ENCODE measurements at regions of chr11 and their contacts with region 1.

Region 1: GRCh38 chr11:13462901-13463778 is at the start of gene BTBD10:
- DNase-seq: peak; percentile 94
- H3K4me3 Mint-ChIP-seq: peak within 1 kb of the TSS; percentile 99
- H3K27ac Mint-ChIP-seq: peak within 1 kb of the TSS; percentile 96
- H3K4me1 Mint-ChIP-seq: peaks cover 33% of the 10 kb centered on the region
- H3K27me3 Mint-ChIP-seq: no peaks in the 10 kb centered on the region
- total RNA-seq, gene BTBD10: 20.9 to 21.0 TPM

Region 2: GRCh38 chr11:12963792-12964536 is 499.2 kb before region 1 on chr11:
- CTCF ChIA-PET with region 1: no interaction called
- intact Hi-C with region 1: loop called (anchors 2 kb)
- DNase-seq: peak; percentile 75
- H3K4me3 Mint-ChIP-seq: no peak overlapping the region
- H3K27ac Mint-ChIP-seq: no peak overlapping the region
- H3K4me1 Mint-ChIP-seq: no peaks in the 10 kb centered on the region
- H3K27me3 Mint-ChIP-seq: peaks cover 13% of the 10 kb centered on the region

Region 3: GRCh38 chr11:13335319-13335718 is 127.8 kb before region 1 on chr11:
- CTCF ChIA-PET with region 1: interaction called, 4 read pairs
- intact Hi-C with region 1: loop called (anchors 2 kb)
- DNase-seq: peak; percentile 86
- H3K4me3 Mint-ChIP-seq: no peak overlapping the region
- H3K27ac Mint-ChIP-seq: no peak overlapping the region
- H3K4me1 Mint-ChIP-seq: peaks cover 76% of the 10 kb centered on the region
- H3K27me3 Mint-ChIP-seq: no peaks in the 10 kb centered on the region

Region 4: DNA sequence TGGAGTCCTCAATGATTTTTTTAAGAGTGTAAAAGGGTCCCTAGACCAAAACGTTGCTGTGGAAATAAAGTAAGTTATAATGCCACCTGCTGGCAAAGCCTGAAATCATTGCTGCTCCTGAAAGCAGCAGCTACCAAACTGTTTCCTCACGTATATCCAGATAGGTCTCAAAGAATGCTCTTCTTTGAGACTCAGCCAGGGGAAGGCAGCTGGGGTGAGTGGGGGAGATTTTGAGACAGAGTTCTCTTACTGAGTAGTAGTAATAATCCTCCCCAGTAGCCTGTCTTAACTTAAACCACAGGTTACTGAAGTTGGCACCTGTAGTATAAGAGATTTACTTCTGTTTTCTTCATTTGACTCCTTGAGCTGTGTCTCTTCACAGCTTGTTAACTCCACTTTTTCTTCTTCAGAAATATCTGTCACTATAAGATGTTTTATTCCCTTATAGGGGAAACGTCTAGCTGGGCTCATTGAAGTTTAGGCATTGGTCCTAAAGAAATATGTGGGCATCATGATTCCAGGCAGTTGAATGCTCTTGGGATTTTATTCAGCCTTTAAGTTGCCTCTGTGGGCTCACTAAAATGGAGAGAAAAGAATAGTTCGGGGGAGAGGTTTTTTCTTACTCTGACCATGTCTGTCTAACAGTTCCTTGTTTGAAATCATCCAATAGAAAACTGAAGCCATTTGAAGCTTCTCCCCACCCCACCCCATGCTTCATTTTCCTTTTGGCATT is 78.1 kb before region 1 on chr11:
- CTCF ChIA-PET with region 1: interaction called, 10 read pairs
- intact Hi-C with region 1: loop called (anchors 2 kb)
- DNase-seq: peak; percentile 46
- H3K4me3 Mint-ChIP-seq: no peak overlapping the region
- H3K27ac Mint-ChIP-seq: no peak overlapping the region
- H3K4me1 Mint-ChIP-seq: peaks cover 2% of the 10 kb centered on the region
- H3K27me3 Mint-ChIP-seq: no peaks in the 10 kb centered on the region

Region 5: DNA sequence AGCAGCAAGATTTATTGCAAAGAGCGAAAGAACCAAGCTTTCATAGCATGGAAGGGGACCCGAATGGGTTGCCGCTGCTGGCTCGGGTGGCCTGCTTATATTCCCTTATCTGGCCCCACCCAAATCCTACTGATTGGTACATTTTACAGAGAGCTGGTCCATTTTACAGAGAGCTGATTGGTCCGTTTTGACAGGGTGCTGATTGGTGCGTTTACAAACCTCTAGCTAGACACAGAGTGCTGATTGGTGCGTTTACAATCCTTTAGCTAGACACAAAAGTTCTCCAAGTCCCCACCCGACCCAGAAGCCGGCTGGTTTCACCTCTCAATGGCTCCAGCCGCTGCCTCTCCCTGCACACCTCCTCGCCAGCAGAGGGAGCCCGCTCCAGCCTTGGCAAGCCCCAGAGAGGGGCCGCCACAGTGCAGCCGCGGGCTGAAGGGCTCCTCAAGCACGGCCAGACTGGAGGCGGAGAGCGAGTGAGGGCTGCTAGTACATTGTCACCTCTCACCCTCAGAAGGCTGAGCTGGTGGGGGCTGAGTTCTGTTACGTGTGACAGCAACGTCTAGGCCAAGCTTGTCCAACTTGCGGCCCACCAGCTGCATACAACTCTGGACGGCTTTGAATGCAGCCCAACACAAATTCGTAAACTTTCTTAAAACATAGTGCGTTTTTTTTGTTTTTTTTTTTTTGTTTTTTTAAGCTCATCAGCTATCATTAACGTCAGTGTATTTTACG is 24.0 kb after region 1 on chr11:
- CTCF ChIA-PET with region 1: interaction called, 20 read pairs
- intact Hi-C with region 1: no loop called
- DNase-seq: peak; percentile 70
- H3K4me3 Mint-ChIP-seq: peak overlapping the region; percentile 62
- H3K27ac Mint-ChIP-seq: no peak overlapping the region
- H3K4me1 Mint-ChIP-seq: peaks cover 2% of the 10 kb centered on the region
- H3K27me3 Mint-ChIP-seq: peaks cover 5% of the 10 kb centered on the region